SK-N-SH (cell line): ENCODE measurements at regions of chr19 and their contacts with region 1.

Region 1: DNA sequence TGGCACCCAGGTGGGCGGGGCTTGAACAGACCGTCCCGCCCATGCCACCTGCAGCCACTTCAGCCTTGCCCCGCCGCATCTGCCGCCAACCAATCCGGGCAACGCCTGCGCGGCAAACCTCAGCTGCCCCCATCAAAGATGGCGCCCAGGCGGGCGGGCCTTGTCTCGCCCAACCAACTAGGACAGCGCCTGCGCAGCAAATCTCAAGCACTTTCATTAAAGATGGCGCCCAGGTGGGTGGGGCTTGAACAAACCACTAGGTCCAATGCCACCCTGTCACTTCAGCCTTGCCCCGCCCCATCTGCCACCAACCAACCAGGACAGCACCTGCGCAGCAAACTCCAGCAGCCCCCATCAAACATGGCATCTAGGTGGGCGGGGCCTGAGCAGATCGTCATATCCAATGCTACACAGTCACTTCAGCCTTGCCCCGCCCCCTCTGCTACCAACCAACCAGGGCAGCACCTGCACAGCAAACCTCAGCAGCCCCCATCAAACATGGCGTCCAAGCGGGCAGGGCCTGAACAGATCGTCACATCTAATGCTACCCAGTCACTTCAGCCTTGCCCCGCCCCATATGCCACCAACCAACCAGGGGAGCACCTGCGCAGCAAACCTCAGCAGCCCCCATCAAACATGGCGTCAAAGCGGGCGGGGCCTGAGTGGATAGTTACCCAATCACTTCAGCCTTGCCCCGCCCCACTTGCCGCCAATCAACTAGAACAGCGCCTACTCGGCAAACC is 1.4 kb downstream of the PEG3 start:
- DNase-seq: peak; percentile 69
- H3K4me3 ChIP-seq: peak overlapping the region; percentile 46 to 62; a peak in 2 of 4 replicates
- H3K27ac ChIP-seq: peak overlapping the region in 1 of 2 experiments; percentile 9; a peak in 1 of 4 replicates
- H3K4me1 ChIP-seq: peaks cover 0 to 2% of the 10 kb centered on the region in 2 experiments; a peak in 1 of 4 replicates
- H3K27me3 ChIP-seq: no peaks in the 10 kb centered on the region
- CTCF ChIP-seq: no peak
- EP300 ChIP-seq: no peak
- RAD21 ChIP-seq: no peak

Region 2: DNA sequence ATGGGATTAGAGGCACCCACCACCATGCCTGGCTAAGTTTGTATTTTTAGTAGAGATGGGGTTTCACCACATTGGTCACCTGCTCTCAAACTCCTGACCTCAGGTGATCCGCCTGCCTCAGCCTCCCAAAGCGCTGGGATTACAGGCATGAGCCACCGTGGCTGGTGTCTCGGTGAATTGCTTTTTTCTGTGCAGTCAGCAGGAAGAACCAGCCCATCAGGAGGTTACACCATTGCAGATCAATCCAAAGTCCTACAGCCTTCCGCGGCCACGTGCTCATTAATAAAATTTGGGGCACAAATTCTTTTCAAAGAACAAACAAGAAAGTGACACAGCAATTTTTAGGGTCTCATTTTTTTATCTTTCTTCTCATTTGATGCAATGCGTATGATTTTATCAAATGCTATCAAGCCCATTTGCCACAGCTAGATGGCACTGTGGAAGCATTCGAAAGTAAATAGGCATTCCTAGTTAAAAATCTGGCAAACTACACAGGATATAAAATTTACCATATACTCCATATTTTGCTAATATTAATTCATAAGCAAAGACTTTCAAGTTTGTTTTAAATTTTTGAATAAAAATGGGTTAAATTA is 113.2 kb before region 1 on chr19:
- CTCF ChIA-PET with region 1: interaction called, 17 read pairs
- POLR2A ChIA-PET with region 1: no interaction called
- DNase-seq: peak; percentile 23
- H3K4me3 ChIP-seq: no peak overlapping the region
- H3K27ac ChIP-seq: no peak overlapping the region
- H3K4me1 ChIP-seq: no peaks in the 10 kb centered on the region
- H3K27me3 ChIP-seq: no peaks in the 10 kb centered on the region
- CTCF ChIP-seq: peak; percentile 33; the same call in 1 of the 2 replicates
- EP300 ChIP-seq: no peak
- RAD21 ChIP-seq: peak; percentile 56

Region 3: GRCh38 chr19:56748378-56748777 is 90.7 kb before region 1 on chr19:
- CTCF ChIA-PET with region 1: interaction called, 70 read pairs
- POLR2A ChIA-PET with region 1: no interaction called
- DNase-seq: peak; percentile 40
- H3K4me3 ChIP-seq: peak overlapping the region in 1 of 2 experiments; percentile 26; a peak in 1 of 4 replicates
- H3K27ac ChIP-seq: no peak overlapping the region
- H3K4me1 ChIP-seq: no peaks in the 10 kb centered on the region; a peak in 1 of 4 replicates
- H3K27me3 ChIP-seq: no peaks in the 10 kb centered on the region
- CTCF ChIP-seq: peak; percentile 41
- EP300 ChIP-seq: no peak
- RAD21 ChIP-seq: peak; percentile 66

Region 4: GRCh38 chr19:56765137-56765536 is 73.9 kb before region 1 on chr19:
- CTCF ChIA-PET with region 1: interaction called, 13 read pairs
- POLR2A ChIA-PET with region 1: no interaction called
- DNase-seq: peak; percentile 75
- H3K4me3 ChIP-seq: peak overlapping the region in 1 of 2 experiments; percentile 22; a peak in 1 of 4 replicates
- H3K27ac ChIP-seq: no peak overlapping the region
- H3K4me1 ChIP-seq: no peaks in the 10 kb centered on the region
- H3K27me3 ChIP-seq: no peaks in the 10 kb centered on the region
- CTCF ChIP-seq: no peak
- EP300 ChIP-seq: no peak
- RAD21 ChIP-seq: no peak

Region 5: GRCh38 chr19:56885173-56885987 is 46.3 kb after region 1 on chr19:
- CTCF ChIA-PET with region 1: no interaction called
- POLR2A ChIA-PET with region 1: no interaction called
- DNase-seq: no peak
- H3K4me3 ChIP-seq: no peak overlapping the region
- H3K27ac ChIP-seq: no peak overlapping the region
- H3K4me1 ChIP-seq: no peaks in the 10 kb centered on the region
- H3K27me3 ChIP-seq: no peaks in the 10 kb centered on the region
- CTCF ChIP-seq: no peak
- EP300 ChIP-seq: no peak
- RAD21 ChIP-seq: no peak

Region 6: DNA sequence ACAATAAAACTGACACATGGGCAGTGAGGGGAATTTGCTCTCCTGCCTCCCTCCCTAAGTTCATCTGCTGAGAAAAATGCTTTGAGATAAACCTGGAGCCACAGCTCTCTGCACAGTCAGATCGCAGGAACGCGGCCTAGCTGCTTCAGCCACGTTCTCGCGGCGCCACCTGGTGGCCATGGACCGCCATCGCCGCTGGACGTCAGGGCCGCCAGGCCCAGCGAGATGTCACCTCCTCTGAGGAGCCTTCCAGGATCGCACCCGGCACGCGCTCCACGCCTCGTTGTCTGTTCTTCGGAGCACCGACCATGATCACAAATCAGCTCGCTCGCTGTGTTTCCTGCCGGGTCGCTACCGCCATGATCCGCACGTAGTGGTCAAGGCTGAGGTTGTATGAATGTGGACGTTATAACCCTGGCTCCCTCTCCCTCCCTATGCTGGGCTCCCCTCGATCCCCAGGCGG is 260.1 kb after region 1 on chr19:
- CTCF ChIA-PET with region 1: interaction called, 12 read pairs
- POLR2A ChIA-PET with region 1: no interaction called
- DNase-seq: peak; percentile 87
- H3K4me3 ChIP-seq: no peak overlapping the region; a peak in 1 of 4 replicates
- H3K27ac ChIP-seq: no peak overlapping the region
- H3K4me1 ChIP-seq: peaks cover 0 to 4% of the 10 kb centered on the region in 2 experiments; a peak in 1 of 4 replicates
- H3K27me3 ChIP-seq: no peaks in the 10 kb centered on the region
- CTCF ChIP-seq: peak; percentile 50
- EP300 ChIP-seq: no peak
- RAD21 ChIP-seq: peak; percentile 80